Aorta (tissue), 5 donors: ENCODE measurements at regions of chr14 and their contacts with region 1.

Region 1: GRCh38 chr14:89027097-89027740 is 202.8 kb downstream of the TTC8 start:
- DNase-seq: peak; percentile 61 to 88
- ATAC-seq: peak; percentile 91
- H3K4me3 ChIP-seq: peak overlapping the region; percentile 33 to 35
- H3K27ac ChIP-seq: no peak overlapping the region
- H3K4me1 ChIP-seq: no peaks in the 10 kb centered on the region
- H3K27me3 ChIP-seq: no peaks in the 10 kb centered on the region

Region 2: GRCh38 chr14:88669346-88669745 is 357.9 kb before region 1 on chr14:
- intact Hi-C with region 1: no loop called
- DNase-seq: no peak
- ATAC-seq: no peak
- H3K4me3 ChIP-seq: no peak overlapping the region
- H3K27ac ChIP-seq: no peak overlapping the region
- H3K4me1 ChIP-seq: no peaks in the 10 kb centered on the region
- H3K27me3 ChIP-seq: no peaks in the 10 kb centered on the region

Region 3: DNA sequence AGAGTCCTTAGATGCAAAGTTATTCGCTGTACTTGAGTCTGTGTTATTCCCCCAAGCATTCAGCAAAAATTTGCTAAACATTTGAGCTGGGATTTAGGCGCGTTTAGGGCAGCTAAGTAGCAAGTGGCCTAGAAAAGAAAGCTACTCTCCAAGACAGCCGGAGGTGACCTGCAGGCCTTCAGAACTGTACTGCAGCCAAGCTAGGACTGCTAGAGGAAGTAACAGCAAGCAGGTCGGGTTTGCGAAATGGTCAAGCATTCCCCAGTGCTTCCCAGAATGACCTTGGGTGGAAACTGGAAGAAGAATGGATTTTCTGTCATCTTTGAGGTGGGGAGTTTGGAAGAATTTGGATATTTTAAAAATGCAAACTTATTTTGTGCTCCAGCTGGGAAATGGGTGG is 102.4 kb after region 1 on chr14:
- intact Hi-C with region 1: no loop called
- DNase-seq: no peak
- ATAC-seq: no peak
- H3K4me3 ChIP-seq: no peak overlapping the region
- H3K27ac ChIP-seq: no peak overlapping the region
- H3K4me1 ChIP-seq: no peaks in the 10 kb centered on the region
- H3K27me3 ChIP-seq: no peaks in the 10 kb centered on the region

Region 4: GRCh38 chr14:89237921-89238529 is 210.8 kb after region 1 on chr14:
- intact Hi-C with region 1: loop called in 1 of 2 experiments (anchors 5 kb)
- DNase-seq: no peak
- ATAC-seq: no peak
- H3K4me3 ChIP-seq: no peak overlapping the region
- H3K27ac ChIP-seq: no peak overlapping the region
- H3K4me1 ChIP-seq: peaks cover 3 to 7% of the 10 kb centered on the region in 2 donors
- H3K27me3 ChIP-seq: no peaks in the 10 kb centered on the region